ENCODE measurements at regions of chr7 and their contacts with region 1.

Region 1: GRCh38 chr7:74656837-74657691 is 454 bp upstream of the GTF2I start:
- DNase-seq: peak; percentile 96
- ATAC-seq: peak; percentile 58
- H3K4me3 Mint-ChIP-seq: peak overlapping the region; percentile 94
- H3K27ac Mint-ChIP-seq: peak overlapping the region; percentile 95
- H3K4me1 Mint-ChIP-seq: peaks cover 53% of the 10 kb centered on the region
- H3K27me3 Mint-ChIP-seq: no peaks in the 10 kb centered on the region
- CTCF ChIP-seq: no peak

Region 2: DNA sequence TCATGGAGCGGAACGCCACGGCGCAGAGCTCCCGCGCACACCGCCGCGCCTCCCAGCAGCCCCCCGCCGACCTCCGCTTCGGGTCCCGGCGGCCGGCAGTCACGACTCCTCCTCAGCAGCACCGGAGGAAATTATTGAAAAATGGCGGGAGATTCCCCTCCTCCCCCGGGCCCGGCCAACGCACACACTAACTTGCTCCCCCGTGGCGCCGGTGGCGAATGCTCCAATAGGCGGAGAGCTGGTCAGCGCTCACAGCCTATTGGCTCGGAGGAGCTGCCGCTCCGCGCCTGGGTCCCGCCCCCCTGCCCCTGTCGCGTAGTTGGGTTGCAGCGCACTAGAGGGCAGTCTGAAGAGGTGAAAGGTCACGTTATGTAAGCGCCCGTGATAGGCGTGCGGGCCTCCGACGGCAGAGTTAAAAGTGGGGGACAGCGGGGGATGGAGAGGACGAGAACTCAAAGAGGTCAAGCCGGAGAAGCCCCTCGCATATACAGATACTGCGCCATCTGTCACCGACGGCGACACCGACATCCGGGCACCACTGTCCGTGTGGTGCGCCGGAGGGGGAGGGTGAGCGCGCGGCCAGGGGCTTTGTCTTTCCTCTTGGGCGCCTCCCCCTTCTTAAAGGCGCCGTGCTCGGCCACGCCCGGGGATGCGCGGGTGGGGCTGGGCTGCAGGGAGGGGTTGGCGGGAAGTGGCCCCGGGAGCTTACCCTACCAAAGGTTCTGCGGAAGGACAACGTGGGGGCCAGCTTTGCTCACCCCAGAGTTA is 1134.8 kb before region 1 on chr7 and contains the start of gene BAZ1B:
- CTCF ChIA-PET with region 1: no interaction called
- POLR2A ChIA-PET with region 1: no interaction called
- intact Hi-C with region 1: loop called (anchors 5 kb)
- DNase-seq: peak; percentile 90
- ATAC-seq: peak; percentile 92
- H3K4me3 Mint-ChIP-seq: peak within 1 kb of the TSS; percentile 95
- H3K27ac Mint-ChIP-seq: peak within 1 kb of the TSS; percentile 97
- H3K4me1 Mint-ChIP-seq: peaks cover 64% of the 10 kb centered on the region
- H3K27me3 Mint-ChIP-seq: no peaks in the 10 kb centered on the region
- CTCF ChIP-seq: no peak
- total RNA-seq, gene BAZ1B: 53.6 and 59.1 TPM in 2 replicates

Region 3: GRCh38 chr7:74217455-74218342 is 439.4 kb before region 1 on chr7:
- CTCF ChIA-PET with region 1: no interaction called
- POLR2A ChIA-PET with region 1: no interaction called
- intact Hi-C with region 1: loop called (anchors 1 kb)
- DNase-seq: peak; percentile 51
- ATAC-seq: peak; percentile 59
- H3K4me3 Mint-ChIP-seq: peak overlapping the region; percentile 69
- H3K27ac Mint-ChIP-seq: peak overlapping the region; percentile 90
- H3K4me1 Mint-ChIP-seq: peaks cover 63% of the 10 kb centered on the region
- H3K27me3 Mint-ChIP-seq: no peaks in the 10 kb centered on the region
- CTCF ChIP-seq: no peak

Region 4: GRCh38 chr7:74449809-74450397 is 207.2 kb before region 1 on chr7:
- CTCF ChIA-PET with region 1: no interaction called
- POLR2A ChIA-PET with region 1: no interaction called
- intact Hi-C with region 1: loop called (anchors 2 kb)
- DNase-seq: peak; percentile 29
- ATAC-seq: peak; percentile 51
- H3K4me3 Mint-ChIP-seq: no peak overlapping the region
- H3K27ac Mint-ChIP-seq: no peak overlapping the region
- H3K4me1 Mint-ChIP-seq: peaks cover 12% of the 10 kb centered on the region
- H3K27me3 Mint-ChIP-seq: peaks cover 3% of the 10 kb centered on the region
- CTCF ChIP-seq: no peak

Region 5: DNA sequence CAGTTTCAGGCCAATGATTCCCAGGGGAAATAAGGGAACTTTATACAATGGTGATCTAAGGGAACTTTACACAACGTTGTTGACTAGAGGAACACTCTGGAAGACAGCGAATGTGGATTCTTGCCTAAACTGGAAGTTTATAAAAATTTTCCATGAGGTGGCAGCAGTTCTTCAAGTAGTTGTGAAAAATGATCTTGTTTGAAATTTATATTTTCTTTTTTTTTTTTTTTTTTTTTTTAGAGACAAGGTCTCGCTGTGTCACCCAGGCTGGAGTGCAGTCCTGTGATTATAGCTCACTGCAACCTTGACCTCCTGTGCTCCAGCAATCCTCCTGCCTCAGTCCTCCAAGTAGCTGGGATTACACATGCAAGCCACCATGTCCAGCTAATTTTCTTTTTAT is 31.6 kb before region 1 on chr7:
- CTCF ChIA-PET with region 1: interaction called, 3 read pairs
- POLR2A ChIA-PET with region 1: interaction called, 8 read pairs
- intact Hi-C with region 1: loop called (anchors 2 kb)
- DNase-seq: no peak
- ATAC-seq: peak; percentile 42
- H3K4me3 Mint-ChIP-seq: no peak overlapping the region
- H3K27ac Mint-ChIP-seq: no peak overlapping the region
- H3K4me1 Mint-ChIP-seq: peaks cover 3% of the 10 kb centered on the region
- H3K27me3 Mint-ChIP-seq: no peaks in the 10 kb centered on the region
- CTCF ChIP-seq: no peak

Region 6: DNA sequence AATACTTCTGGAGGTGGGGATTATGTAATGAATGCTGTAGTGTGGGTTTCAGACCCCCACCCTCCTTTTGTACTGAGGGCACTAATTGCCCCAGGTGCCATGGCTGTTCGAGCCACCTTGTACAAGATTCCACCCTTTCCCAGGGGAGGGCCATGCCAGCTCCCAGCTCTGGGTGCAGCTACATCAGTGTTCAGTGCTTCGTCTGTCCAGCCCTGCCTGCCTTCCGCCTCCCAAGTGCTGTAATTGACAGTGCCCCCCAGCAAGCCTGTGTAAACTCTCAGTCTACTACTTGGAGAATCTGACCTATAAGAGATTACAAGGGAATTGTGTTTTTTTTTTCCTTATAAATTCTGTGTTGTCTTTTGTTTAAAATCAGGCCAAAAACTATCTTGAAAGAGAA is 33.4 kb after region 1 on chr7:
- CTCF ChIA-PET with region 1: no interaction called
- POLR2A ChIA-PET with region 1: interaction called, 7 read pairs
- intact Hi-C with region 1: loop called (anchors 5 kb)
- DNase-seq: no peak
- ATAC-seq: no peak
- H3K4me3 Mint-ChIP-seq: no peak overlapping the region
- H3K27ac Mint-ChIP-seq: no peak overlapping the region
- H3K4me1 Mint-ChIP-seq: peaks cover 14% of the 10 kb centered on the region
- H3K27me3 Mint-ChIP-seq: no peaks in the 10 kb centered on the region
- CTCF ChIP-seq: no peak